Heart right ventricle (tissue), 16 donors: ENCODE measurements at regions of chr12 and their contacts with region 1.

Region 1: DNA sequence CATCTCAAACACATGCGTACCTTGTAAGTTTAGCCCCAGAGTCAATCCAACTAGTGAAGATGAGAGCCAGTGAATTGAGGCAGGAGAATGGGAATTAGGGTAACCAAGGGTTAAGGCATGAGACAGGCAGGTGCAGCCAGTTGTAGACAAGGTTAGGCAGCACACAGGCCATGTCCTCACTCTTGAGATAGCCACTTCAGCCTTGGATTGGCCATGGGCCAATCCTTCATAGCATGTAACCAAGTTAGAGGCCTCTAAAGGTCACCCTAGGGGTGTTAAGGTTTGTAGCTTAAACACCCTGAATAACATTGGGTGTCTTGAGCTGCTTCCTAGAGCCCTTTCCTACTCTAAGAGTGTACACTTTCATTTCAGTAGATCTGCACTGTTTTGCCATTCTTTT is 208.2 kb upstream of the RBM19 start:
- DNase-seq: peak in 1 of 2 donors; percentile 12
- ATAC-seq: peak in 7 of 8 donors; percentile 26 to 85 (median 67)
- H3K4me3 ChIP-seq: no peak overlapping the region
- H3K27ac ChIP-seq: no peak overlapping the region
- H3K4me1 ChIP-seq: peaks cover 0 to 17% (median 6%) of the 10 kb centered on the region in 9 donors
- H3K27me3 ChIP-seq: no peaks in the 10 kb centered on the region
- CTCF ChIP-seq: no peak

Region 2: DNA sequence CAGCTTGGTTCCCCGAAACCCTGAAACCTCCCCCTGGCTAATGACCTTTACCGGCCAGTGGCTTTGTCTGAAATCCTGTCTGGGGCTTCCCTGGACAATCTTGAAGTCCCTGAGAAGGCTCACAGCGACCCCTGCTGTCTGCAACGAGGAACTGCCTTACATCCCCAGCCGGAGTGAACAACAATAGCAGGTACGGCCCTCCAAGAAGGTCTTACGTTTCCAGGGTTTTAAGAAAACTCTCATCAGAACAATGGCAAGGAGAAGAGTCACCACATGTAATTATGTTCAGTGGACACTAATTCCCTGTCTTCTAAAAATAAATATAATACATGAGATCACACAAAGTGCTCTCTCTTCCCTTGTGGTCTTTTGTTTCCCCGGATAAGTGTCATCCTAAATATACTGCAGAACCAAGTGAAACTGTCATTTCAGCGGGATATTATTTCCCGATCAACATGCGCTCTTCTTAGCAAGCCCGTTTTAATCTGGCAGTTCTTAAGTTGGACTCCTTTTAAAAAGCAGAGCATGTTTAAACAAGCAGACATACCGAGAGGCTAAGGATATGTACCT is 261.5 kb before region 1 on chr12:
- intact Hi-C with region 1: no loop called
- DNase-seq: peak; percentile 47 to 51
- ATAC-seq: peak in 6 of 8 donors; percentile 38 to 85 (median 74)
- H3K4me3 ChIP-seq: no peak overlapping the region
- H3K27ac ChIP-seq: no peak overlapping the region
- H3K4me1 ChIP-seq: no peaks in the 10 kb centered on the region
- H3K27me3 ChIP-seq: no peaks in the 10 kb centered on the region
- CTCF ChIP-seq: peak; percentile 59 to 91 (median 87)

Region 3: DNA sequence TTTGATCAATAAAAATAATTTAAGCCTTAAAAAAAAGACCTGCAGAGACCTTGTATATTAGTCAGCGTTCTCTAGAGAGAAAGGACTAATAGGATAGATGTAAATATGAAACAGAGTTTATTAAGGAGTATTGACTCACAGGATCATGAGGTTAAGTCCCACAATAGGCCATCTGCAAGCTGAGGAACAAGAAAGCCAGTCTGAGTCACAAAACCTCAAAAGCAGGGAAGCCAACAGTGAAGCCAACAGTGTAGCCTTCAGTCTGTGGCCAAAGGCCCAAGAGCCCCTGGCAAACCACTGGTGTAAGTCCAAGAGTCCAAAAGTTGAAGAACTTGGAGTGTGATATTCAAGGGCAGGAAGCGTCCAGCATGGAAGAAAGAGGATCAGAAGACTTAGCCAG is 165.3 kb after region 1 on chr12:
- intact Hi-C with region 1: loop called in 1 of 10 experiments (anchors 10 kb)
- DNase-seq: no peak
- ATAC-seq: no peak
- H3K4me3 ChIP-seq: no peak overlapping the region
- H3K27ac ChIP-seq: no peak overlapping the region
- H3K4me1 ChIP-seq: peaks cover 0 to 7% (median 0%) of the 10 kb centered on the region in 9 donors
- H3K27me3 ChIP-seq: peaks cover 0 to 3% (median 0%) of the 10 kb centered on the region in 7 donors
- CTCF ChIP-seq: no peak